Thyroid gland (tissue), 4 donors: ENCODE measurements at regions of chr5 and their contacts with region 1.

Region 1: GRCh38 chr5:149828161-149828884 is 98.2 kb downstream of the PPARGC1B start:
- DNase-seq: peak; percentile 82 to 87
- H3K4me3 ChIP-seq: no peak overlapping the region
- H3K27ac ChIP-seq: no peak overlapping the region
- H3K4me1 ChIP-seq: no peaks in the 10 kb centered on the region
- H3K27me3 ChIP-seq: no peaks in the 10 kb centered on the region
- CTCF ChIP-seq: peak; percentile 63 to 89 (median 78)
- POLR2A ChIP-seq: no peak

Region 2: GRCh38 chr5:149636851-149637246 is 191.5 kb before region 1 on chr5:
- intact Hi-C with region 1: loop called (anchors 5 kb)
- DNase-seq: peak; percentile 22 to 79
- H3K4me3 ChIP-seq: no peak overlapping the region
- H3K27ac ChIP-seq: no peak overlapping the region
- H3K4me1 ChIP-seq: peaks cover 0 to 10% of the 10 kb centered on the region in 2 donors
- H3K27me3 ChIP-seq: no peaks in the 10 kb centered on the region
- CTCF ChIP-seq: peak; percentile 35 to 94 (median 66)
- POLR2A ChIP-seq: no peak

Region 3: DNA sequence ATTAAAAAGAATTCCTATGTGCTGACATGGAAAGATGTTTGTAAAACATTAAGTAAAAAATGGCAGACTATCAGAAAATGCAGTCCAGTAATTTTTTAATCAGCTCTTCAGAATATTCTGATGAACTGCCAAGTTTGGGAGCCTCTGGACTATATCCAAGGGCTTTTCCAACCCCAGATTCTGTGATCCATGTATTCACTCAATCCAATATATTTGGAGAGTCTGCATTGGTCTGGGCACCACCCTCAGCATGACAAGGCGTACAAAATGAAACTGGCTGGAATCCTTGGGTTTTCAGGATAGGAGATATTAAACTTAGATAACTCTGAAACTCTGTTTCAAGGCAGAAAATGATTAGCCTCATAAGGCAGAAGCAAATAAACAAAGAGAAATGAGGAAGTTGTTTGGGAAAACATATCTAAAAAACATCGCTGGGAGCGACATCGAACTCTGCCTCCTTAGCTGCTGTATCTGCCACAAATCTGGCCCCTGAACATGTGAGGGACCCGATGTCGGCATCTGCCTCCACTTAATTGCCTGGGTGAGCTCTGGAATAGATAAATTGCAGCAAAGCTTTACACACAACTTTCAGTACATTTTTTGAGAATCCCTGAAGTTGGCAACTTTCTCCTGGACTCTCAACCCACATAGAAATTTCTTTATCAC is 101.9 kb after region 1 on chr5:
- intact Hi-C with region 1: no loop called
- DNase-seq: no peak
- H3K4me3 ChIP-seq: no peak overlapping the region
- H3K27ac ChIP-seq: no peak overlapping the region
- H3K4me1 ChIP-seq: peaks cover 0 to 3% of the 10 kb centered on the region in 2 donors
- H3K27me3 ChIP-seq: peaks cover 5% of the 10 kb centered on the region
- CTCF ChIP-seq: no peak
- POLR2A ChIP-seq: no peak